ENCODE measurements at regions of chr1 and their contacts with region 1.

Region 1: DNA sequence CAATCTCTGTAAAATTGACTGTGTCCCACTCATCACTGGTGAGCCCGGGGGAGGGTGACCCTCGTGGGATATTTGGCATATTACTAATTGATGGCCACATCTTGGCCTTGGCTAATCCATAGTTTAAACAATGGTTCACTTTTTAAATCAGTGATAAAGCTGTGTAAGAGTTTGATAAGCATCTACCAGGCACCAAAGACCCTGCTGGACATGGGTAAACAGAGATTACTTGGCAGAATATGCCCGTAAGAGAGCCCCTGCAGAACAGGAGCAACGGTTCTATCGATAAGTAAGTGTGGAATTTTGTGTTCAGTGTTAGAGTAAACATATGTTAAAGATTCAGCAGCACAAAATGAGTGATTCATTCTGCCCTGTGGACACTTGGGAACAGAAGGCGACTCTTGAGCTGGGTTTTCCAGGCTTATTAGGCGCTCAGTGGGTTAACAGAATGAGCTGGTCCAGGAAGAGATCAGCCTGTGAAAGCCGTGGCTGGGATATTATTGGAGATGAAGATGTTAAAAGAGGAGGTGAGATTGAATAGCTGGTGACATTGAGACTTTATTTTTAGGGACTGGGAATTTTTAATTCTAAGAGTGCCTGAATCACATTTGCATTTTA is 55.9 kb downstream of the CNST start:
- DNase-seq: no peak
- H3K4me3 ChIP-seq: no peak overlapping the region
- H3K27ac ChIP-seq: no peak overlapping the region
- H3K4me1 ChIP-seq: peaks cover 11% of the 10 kb centered on the region
- H3K27me3 ChIP-seq: no peaks in the 10 kb centered on the region
- CTCF ChIP-seq: no peak
- POLR2A ChIP-seq: no peak

Region 2: DNA sequence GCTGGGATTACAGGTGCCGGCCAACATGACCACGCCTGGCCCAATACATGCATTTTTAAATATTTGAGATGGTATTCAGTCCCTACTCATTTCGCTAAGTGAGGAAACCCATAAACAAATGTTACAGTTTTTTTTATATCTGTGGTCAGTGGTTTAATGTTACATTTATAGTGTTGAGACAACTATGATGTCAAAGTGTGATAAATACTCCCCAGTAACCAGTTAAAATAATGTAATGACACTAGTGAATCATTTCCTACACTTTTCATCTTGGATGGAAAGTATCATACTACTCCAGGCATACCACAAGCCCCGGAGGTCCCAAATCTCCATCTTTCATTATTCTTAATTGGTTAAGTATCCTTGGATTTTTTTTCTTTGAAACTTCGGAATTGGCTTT is 1554.9 kb before region 1 on chr1:
- intact Hi-C with region 1: no loop called
- DNase-seq: no peak
- H3K4me3 ChIP-seq: no peak overlapping the region
- H3K27ac ChIP-seq: no peak overlapping the region
- H3K4me1 ChIP-seq: no peaks in the 10 kb centered on the region
- H3K27me3 ChIP-seq: no peaks in the 10 kb centered on the region
- CTCF ChIP-seq: no peak
- POLR2A ChIP-seq: no peak

Region 3: DNA sequence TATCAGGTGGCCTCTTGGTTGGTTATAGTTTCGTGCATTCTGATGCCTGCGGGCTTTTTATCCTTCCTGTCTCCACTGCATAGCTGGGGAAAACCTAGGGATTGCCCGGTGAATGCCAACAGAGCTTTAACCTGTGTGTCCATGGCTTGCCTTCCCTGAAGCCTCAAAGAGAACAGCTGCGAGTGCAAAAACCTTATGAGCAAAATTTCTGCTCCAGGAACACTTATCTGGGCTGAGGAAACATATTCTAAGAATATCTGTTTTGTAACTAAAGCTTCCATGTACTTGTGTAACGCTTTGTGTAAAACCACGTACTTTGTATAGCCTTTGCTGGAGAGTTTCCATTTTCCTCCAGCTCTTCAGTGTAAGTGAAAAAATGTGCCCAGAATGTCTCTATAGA is 48.7 kb before region 1 on chr1:
- intact Hi-C with region 1: loop called (anchors 2 kb)
- DNase-seq: no peak
- H3K4me3 ChIP-seq: no peak overlapping the region
- H3K27ac ChIP-seq: peak overlapping the region; percentile 6
- H3K4me1 ChIP-seq: peaks cover 38% of the 10 kb centered on the region
- H3K27me3 ChIP-seq: no peaks in the 10 kb centered on the region
- CTCF ChIP-seq: no peak
- POLR2A ChIP-seq: no peak